Right cardiac atrium (tissue), 5 donors: ENCODE measurements at regions of chr1 and their contacts with region 1.

Region 1: GRCh38 chr1:235971571-235972310 is 93.1 kb downstream of the NID1 start:
- DNase-seq: peak; percentile 93 to 96 (median 94)
- ATAC-seq: peak; percentile 95 to 96
- H3K4me3 ChIP-seq: peak overlapping the region; percentile 52
- H3K27ac ChIP-seq: peak overlapping the region; percentile 96
- H3K4me1 ChIP-seq: no peaks in the 10 kb centered on the region
- H3K27me3 ChIP-seq: no peaks in the 10 kb centered on the region

Region 2: GRCh38 chr1:235799264-235799663 is 172.5 kb before region 1 on chr1:
- intact Hi-C with region 1: loop called in 1 of 4 experiments (anchors 5 kb)
- DNase-seq: no peak
- ATAC-seq: no peak
- H3K4me3 ChIP-seq: no peak overlapping the region
- H3K27ac ChIP-seq: no peak overlapping the region
- H3K4me1 ChIP-seq: no peaks in the 10 kb centered on the region
- H3K27me3 ChIP-seq: no peaks in the 10 kb centered on the region

Region 3: DNA sequence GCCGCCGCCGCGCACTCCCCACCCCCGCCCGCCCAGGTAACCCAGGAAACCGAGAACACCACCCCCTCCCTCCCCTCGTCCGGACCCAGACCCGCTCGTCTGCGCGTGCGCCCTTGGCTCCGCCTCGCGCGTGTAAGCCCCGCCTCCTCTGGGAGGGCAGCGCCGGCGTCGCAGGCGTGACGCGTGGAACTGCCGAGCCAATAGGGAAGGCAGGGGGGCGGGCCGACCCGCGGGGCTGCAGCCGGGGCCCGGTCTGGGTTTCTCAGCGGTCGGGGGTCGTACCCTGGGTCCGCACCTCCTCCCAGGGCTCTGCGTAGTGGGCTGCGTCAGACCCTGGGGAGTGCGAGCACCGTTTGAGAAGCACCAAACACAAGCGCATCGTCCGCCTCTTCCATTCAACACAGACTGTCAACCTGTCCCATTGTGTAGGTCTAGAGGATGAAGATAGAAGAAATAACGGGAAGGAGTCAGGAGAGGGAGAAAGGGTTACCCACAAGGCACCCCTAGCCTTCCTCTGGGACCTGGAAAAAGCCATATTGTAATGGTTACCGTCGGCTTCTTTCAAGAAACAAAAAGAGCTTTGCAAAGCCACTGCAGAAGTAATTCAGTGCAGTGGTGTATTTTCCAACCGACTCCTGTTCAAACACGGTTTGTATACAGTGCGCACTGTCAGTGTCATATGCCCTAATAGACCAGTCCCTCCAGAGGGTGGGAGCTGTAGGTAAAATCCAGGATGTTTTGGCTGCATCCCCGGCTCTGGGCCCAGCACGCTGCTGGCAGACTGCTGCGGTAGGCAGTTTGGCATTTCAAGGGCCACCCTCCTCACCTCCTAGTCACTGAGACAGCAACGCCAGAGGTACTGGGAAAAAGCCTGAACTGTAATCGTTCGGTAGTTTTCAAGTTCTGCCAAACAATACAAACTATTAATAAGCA is 104.6 kb before region 1 on chr1:
- intact Hi-C with region 1: loop called in 3 of 4 experiments (anchors 5 to 10 kb)
- DNase-seq: peak; percentile 95 to 99 (median 98)
- ATAC-seq: peak; percentile 99
- H3K4me3 ChIP-seq: peak overlapping the region; percentile 83
- H3K27ac ChIP-seq: peak overlapping the region; percentile 71
- H3K4me1 ChIP-seq: no peaks in the 10 kb centered on the region
- H3K27me3 ChIP-seq: no peaks in the 10 kb centered on the region

Region 4: GRCh38 chr1:235878082-235878811 is 93.5 kb before region 1 on chr1:
- intact Hi-C with region 1: loop called in 2 of 4 experiments (anchors 10 kb)
- DNase-seq: peak in 1 of 3 donors; percentile 57
- ATAC-seq: peak; percentile 58 to 85
- H3K4me3 ChIP-seq: no peak overlapping the region
- H3K27ac ChIP-seq: no peak overlapping the region
- H3K4me1 ChIP-seq: peaks cover 2% of the 10 kb centered on the region
- H3K27me3 ChIP-seq: no peaks in the 10 kb centered on the region

Region 5: GRCh38 chr1:236064674-236065508 is 93.2 kb after region 1 on chr1 and contains the start of gene NID1:
- intact Hi-C with region 1: no loop called
- DNase-seq: peak; percentile 89 to 95 (median 95)
- ATAC-seq: peak; percentile 88 to 90
- H3K4me3 ChIP-seq: peak within 1 kb of the TSS; percentile 63
- H3K27ac ChIP-seq: peak within 1 kb of the TSS; percentile 92
- H3K4me1 ChIP-seq: peaks cover 4% of the 10 kb centered on the region
- H3K27me3 ChIP-seq: no peaks in the 10 kb centered on the region
- total RNA-seq, gene NID1: 31.3 to 107 (median 58.1) TPM